Activated T-helper 1 cell treated with anti-CD3 and anti-CD28 coated beads, Interleukin-12 subunit alpha, Interleukin-12 subunit beta, Interleukin-2, Interleukin-4 antibody, amounts not matched to agents 30 ng/mL and 10 ng/mL and 1 ng/mL, durations not matched to agents 14 hours and 24 hours and 36 hours (primary cell): ENCODE measurements at regions of chr22 and their contacts with region 1.

Region 1: GRCh38 chr22:37643225-37643847 is 3.9 kb downstream of the SH3BP1 start:
- DNase-seq: peak; percentile 74
- H3K4me3 Mint-ChIP-seq: peak overlapping the region; percentile 59
- H3K27ac Mint-ChIP-seq: peak overlapping the region; percentile 52
- H3K4me1 Mint-ChIP-seq: peaks cover 26% of the 10 kb centered on the region
- H3K27me3 Mint-ChIP-seq: no peaks in the 10 kb centered on the region

Region 2: GRCh38 chr22:37383341-37383740 is 260.0 kb before region 1 on chr22:
- intact Hi-C with region 1: no loop called
- DNase-seq: no peak
- H3K4me3 Mint-ChIP-seq: no peak overlapping the region
- H3K27ac Mint-ChIP-seq: no peak overlapping the region
- H3K4me1 Mint-ChIP-seq: no peaks in the 10 kb centered on the region
- H3K27me3 Mint-ChIP-seq: peaks cover 4% of the 10 kb centered on the region

Region 3: GRCh38 chr22:37599153-37599552 is 44.2 kb before region 1 on chr22:
- intact Hi-C with region 1: no loop called
- DNase-seq: no peak
- H3K4me3 Mint-ChIP-seq: no peak overlapping the region
- H3K27ac Mint-ChIP-seq: no peak overlapping the region
- H3K4me1 Mint-ChIP-seq: peaks cover 8% of the 10 kb centered on the region
- H3K27me3 Mint-ChIP-seq: peaks cover 12% of the 10 kb centered on the region

Region 4: DNA sequence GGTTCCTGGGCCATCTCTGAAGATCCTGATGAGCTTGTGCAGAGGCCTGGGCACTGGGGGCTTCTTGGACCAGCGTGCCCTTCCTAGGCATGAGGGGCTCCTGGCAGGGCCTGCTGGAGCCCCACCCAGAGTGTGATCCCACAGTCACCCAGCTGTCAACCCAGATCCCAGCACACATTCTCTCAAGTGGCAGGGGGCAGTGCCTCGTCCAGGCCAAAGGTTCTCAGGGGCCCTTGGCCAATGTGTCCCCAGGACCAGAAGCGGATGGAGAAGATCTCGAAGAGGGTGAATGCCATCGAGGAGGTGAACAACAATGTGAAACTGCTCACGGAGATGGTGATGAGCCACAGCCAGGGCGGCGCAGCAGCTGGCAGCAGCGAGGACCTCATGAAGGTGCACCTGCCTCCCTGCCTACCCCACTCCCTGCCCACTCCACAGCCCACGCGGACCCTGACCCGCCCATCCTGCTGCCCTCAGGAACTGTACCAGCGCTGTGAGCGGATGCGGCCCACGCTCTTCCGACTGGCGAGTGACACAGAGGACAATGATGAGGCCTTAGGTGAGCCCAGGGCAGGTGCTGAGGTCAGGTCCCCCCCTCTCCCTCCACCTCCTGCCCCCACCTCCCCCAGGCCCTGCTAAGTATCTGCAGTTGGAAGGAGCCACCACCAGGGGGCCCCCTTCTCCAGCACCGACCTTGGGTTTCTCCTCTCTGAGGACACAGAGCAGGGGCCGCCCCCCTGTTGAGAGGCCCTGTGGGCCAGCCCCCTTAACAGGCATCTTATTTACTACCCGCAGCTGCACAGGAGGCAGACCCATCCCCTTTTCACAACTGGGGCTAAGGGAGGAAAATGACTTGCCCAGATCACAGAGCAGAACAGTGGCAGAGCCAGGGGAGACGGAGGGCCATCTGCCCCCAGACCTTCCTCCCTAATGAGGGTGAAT is 20.0 kb before region 1 on chr22:
- intact Hi-C with region 1: loop called (anchors 1 kb)
- DNase-seq: peak; percentile 58
- H3K4me3 Mint-ChIP-seq: peak overlapping the region; percentile 37
- H3K27ac Mint-ChIP-seq: peak overlapping the region; percentile 70
- H3K4me1 Mint-ChIP-seq: peaks cover 37% of the 10 kb centered on the region
- H3K27me3 Mint-ChIP-seq: no peaks in the 10 kb centered on the region

Region 5: GRCh38 chr22:37658133-37659065 is 15.1 kb after region 1 on chr22 and contains the start of gene PDXP:
- intact Hi-C with region 1: loop called (anchors 1 kb)
- DNase-seq: peak; percentile 99
- H3K4me3 Mint-ChIP-seq: peak within 1 kb of the TSS; percentile 89
- H3K27ac Mint-ChIP-seq: peak within 1 kb of the TSS; percentile 91
- H3K4me1 Mint-ChIP-seq: peaks cover 43% of the 10 kb centered on the region
- H3K27me3 Mint-ChIP-seq: no peaks in the 10 kb centered on the region
- total RNA-seq, gene PDXP: 47.0 and 50.4 TPM in 2 replicates